Upper lobe of right lung (tissue), 1 donor: ENCODE measurements at regions of chr11 and their contacts with region 1.

Region 1: DNA sequence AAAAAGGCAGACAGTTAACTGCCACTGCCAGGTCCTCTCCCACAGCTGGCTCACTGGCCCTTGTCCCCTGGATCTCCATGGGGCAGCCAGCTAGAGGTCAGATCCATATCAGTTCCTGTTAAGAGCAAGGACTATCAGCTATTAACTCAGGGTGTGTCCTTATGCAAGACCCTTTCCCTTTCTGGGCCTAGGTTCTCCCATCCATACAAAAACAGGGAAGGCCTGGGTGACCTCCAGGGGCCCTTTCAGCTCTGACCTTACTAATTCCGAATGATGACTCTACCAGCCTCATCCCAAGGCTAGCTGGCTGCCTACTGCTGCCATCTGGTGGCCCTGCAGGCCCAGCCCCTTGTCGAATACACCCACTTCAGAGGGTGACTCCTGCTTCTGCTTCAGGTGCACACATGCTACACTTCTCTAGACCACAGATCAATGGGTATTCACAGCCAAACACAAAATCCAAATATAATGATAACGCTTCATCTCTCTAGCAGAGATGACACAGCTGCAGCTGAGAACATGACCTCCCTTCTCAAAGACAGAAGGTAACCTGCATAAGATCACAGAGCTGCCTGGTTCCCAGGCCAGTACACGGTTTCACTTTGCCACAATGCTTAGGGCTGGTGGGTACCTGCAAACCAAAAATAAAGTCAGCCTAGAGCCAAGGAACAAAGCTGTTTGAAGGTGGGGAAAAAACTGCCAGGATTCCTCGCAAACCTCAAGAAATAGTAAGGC is 34.1 kb downstream of the SERGEF start:
- DNase-seq: no peak
- ATAC-seq: peak; percentile 74
- H3K4me3 ChIP-seq: no peak overlapping the region
- H3K27ac ChIP-seq: no peak overlapping the region
- H3K4me1 ChIP-seq: no peaks in the 10 kb centered on the region
- H3K27me3 ChIP-seq: no peaks in the 10 kb centered on the region
- CTCF ChIP-seq: peak; percentile 47

Region 2: DNA sequence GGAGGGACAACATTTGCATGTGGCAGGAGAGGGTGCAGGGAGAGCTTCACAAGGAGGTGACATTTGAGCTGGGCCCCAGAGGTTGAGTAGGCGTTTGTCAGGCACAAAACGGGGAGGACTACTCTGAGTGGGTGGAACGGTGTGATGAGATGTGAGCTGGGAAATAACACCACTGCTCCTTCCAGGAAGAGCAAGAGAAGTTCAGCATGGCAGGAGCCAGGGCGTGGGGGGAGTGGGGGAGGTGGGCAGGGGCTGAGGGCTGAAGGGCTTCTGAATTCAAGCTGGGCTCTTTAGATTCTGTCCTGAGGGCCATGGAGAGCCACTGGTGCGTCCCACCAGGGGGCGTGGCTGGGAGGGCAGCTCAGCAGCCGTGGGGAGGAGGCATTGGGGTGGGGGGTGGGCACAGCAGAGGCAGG is 377.5 kb before region 1 on chr11:
- intact Hi-C with region 1: loop called (anchors 10 kb)
- DNase-seq: no peak
- ATAC-seq: no peak
- H3K4me3 ChIP-seq: no peak overlapping the region
- H3K27ac ChIP-seq: no peak overlapping the region
- H3K4me1 ChIP-seq: no peaks in the 10 kb centered on the region
- H3K27me3 ChIP-seq: no peaks in the 10 kb centered on the region
- CTCF ChIP-seq: no peak

Region 3: GRCh38 chr11:17733261-17733660 is 245.5 kb before region 1 on chr11:
- intact Hi-C with region 1: loop called (anchors 2 kb)
- DNase-seq: no peak
- ATAC-seq: no peak
- H3K4me3 ChIP-seq: no peak overlapping the region
- H3K27ac ChIP-seq: no peak overlapping the region
- H3K4me1 ChIP-seq: peaks cover 3% of the 10 kb centered on the region
- H3K27me3 ChIP-seq: peaks cover 65% of the 10 kb centered on the region
- CTCF ChIP-seq: no peak